Testis (tissue), 5 donors: ENCODE measurements at regions of chr16 and their contacts with region 1.

Region 1: DNA sequence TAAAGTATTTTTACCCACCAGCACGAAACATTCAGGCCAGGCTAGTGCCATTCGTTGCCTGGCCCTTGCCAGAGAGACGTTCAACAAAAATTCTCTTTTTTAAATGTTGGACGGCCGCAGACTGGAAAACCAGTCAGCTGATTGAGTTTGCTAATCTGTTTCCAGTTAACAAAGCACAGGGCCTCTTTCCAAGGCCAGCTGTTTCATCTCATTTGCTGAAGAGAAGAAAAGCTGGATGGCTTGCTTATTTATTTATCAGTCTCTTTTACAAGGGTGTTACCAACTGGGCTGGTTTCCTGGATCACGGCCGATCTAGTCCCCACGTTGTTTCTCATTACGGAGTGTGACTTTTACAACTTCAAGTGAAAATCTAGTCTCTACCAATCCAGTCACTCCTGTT is 418.7 kb upstream of the DYNLRB2 start:
- DNase-seq: peak; percentile 91
- H3K4me3 ChIP-seq: no peak overlapping the region
- H3K27ac ChIP-seq: peak overlapping the region; percentile 20 to 46
- H3K4me1 ChIP-seq: peaks cover 38% of the 10 kb centered on the region
- H3K27me3 ChIP-seq: no peaks in the 10 kb centered on the region
- CTCF ChIP-seq: no peak
- POLR2A ChIP-seq: no peak

Region 2: DNA sequence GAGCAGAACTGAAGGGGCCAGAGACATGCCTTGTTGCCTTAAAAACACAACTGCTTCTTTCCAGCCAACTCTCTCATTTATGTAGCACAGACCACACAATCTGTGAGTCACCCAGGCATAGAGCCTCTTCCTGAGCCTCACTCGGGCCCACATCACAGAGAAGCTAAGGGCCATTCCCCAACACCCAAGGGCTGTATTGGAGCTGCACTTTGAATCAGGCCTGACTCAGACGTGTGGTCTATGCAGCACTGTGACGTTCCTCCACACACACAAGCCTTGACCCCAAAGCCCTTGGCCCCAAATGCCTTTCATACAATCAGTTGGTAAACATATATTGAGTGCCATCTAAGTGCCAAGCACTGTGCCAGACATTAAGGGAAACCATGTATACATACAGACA is 109.8 kb after region 1 on chr16:
- intact Hi-C with region 1: loop called (anchors 10 kb)
- DNase-seq: no peak
- H3K4me3 ChIP-seq: no peak overlapping the region
- H3K27ac ChIP-seq: no peak overlapping the region
- H3K4me1 ChIP-seq: peaks cover 12% of the 10 kb centered on the region
- H3K27me3 ChIP-seq: no peaks in the 10 kb centered on the region
- CTCF ChIP-seq: no peak
- POLR2A ChIP-seq: no peak

Region 3: GRCh38 chr16:80369138-80369958 is 247.2 kb after region 1 on chr16:
- intact Hi-C with region 1: no loop called
- DNase-seq: peak; percentile 69
- H3K4me3 ChIP-seq: no peak overlapping the region
- H3K27ac ChIP-seq: no peak overlapping the region
- H3K4me1 ChIP-seq: no peaks in the 10 kb centered on the region
- H3K27me3 ChIP-seq: no peaks in the 10 kb centered on the region
- CTCF ChIP-seq: peak in 2 of 3 experiments; percentile 41 to 50
- POLR2A ChIP-seq: no peak